ENCODE measurements at regions of chr3 and their contacts with region 1.

Region 1: DNA sequence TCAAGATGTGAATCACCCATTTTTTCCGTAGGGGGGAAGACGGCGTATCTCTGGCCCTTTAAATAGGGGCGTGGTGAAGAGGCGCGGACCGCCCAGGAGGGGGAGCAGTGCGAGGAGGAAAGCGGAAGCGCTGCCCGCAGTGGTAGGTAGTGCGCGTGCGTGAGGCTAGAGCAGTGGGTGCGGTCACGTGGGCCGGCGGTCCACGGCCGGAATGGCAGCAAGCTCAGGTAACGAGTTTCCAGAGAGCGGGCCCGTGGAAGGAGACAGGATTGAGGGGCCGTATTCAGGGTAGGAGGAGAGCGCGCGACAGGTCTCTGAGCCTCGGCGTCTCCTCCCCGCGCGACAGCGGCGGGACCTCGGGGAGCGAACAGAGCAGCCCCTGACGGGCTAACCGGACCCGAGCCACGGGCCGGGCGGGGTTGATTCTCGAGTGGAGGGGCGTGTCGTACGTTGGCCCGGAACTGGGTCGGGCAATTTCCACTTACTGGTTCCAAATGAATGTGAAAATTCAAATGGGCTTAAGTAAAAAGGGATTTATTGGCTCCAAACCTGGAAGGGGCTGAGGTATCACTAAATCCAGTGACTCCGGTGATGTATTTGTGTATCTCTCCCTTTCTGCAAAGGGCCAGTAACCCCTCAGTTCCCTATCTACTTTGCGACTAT is at the start of gene VPS8:
- DNase-seq: peak; percentile 91 to 98 (median 96)
- ATAC-seq: peak; percentile 85
- H3K4me3 ChIP-seq: peak within 1 kb of the TSS; percentile 84
- H3K4me3 Mint-ChIP-seq: peak within 1 kb of the TSS; percentile 95
- H3K27ac ChIP-seq: peak within 1 kb of the TSS; percentile 86 to 87
- H3K27ac Mint-ChIP-seq: peak within 1 kb of the TSS; percentile 90
- H3K4me1 ChIP-seq: peaks cover 28% of the 10 kb centered on the region
- H3K4me1 Mint-ChIP-seq: peaks cover 59% of the 10 kb centered on the region
- H3K27me3 ChIP-seq: no peaks in the 10 kb centered on the region
- H3K27me3 Mint-ChIP-seq: no peaks in the 10 kb centered on the region
- CTCF ChIP-seq: peak; percentile 64
- total RNA-seq, gene VPS8: 56.8 to 61.2 TPM

Region 2: GRCh38 chr3:183099026-183099837 is 1712.9 kb before region 1 on chr3 and contains the start of gene MCCC1:
- CTCF ChIA-PET with region 1: no interaction called
- POLR2A ChIA-PET with region 1: no interaction called
- intact Hi-C with region 1: loop called in 1 of 2 experiments (anchors 10 kb)
- DNase-seq: peak; percentile 92 to 99 (median 96)
- ATAC-seq: peak; percentile 97
- H3K4me3 ChIP-seq: peak within 1 kb of the TSS; percentile 87
- H3K4me3 Mint-ChIP-seq: peak within 1 kb of the TSS; percentile 99
- H3K27ac ChIP-seq: peak within 1 kb of the TSS; percentile 80 to 81
- H3K27ac Mint-ChIP-seq: peak within 1 kb of the TSS; percentile 96
- H3K4me1 ChIP-seq: peaks cover 18% of the 10 kb centered on the region
- H3K4me1 Mint-ChIP-seq: peaks cover 46% of the 10 kb centered on the region
- H3K27me3 ChIP-seq: no peaks in the 10 kb centered on the region
- H3K27me3 Mint-ChIP-seq: no peaks in the 10 kb centered on the region
- CTCF ChIP-seq: no peak
- total RNA-seq, gene MCCC1: 16.4 to 16.7 TPM

Region 3: DNA sequence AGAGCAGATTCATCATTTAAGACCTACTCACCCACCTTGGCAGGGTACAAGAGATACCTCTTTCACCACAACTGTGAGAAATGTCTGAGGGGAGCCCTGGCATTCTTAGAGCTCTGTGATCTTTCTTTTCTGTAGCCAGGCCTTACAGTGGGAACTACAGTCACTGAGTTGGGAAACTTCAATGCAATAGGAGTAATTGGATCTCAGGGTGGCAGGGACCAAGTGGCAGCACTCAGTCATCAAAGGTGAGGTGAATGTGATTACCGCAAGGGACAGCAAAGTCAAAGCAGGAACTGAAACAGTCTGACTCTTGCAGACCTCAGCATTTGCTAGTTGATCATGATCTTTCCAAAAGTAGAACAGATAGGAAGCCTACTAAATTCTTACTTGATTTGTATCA is 1376.5 kb before region 1 on chr3:
- CTCF ChIA-PET with region 1: no interaction called
- POLR2A ChIA-PET with region 1: no interaction called
- intact Hi-C with region 1: no loop called
- DNase-seq: peak in 3 of 14 experiments; percentile 21 to 24 (median 23)
- ATAC-seq: no peak
- H3K4me3 ChIP-seq: no peak overlapping the region
- H3K4me3 Mint-ChIP-seq: no peak overlapping the region
- H3K27ac ChIP-seq: no peak overlapping the region
- H3K27ac Mint-ChIP-seq: no peak overlapping the region
- H3K4me1 ChIP-seq: peaks cover 6% of the 10 kb centered on the region
- H3K4me1 Mint-ChIP-seq: peaks cover 5% of the 10 kb centered on the region
- H3K27me3 ChIP-seq: peaks cover 0 to 2% of the 10 kb centered on the region in 2 experiments
- H3K27me3 Mint-ChIP-seq: no peaks in the 10 kb centered on the region
- CTCF ChIP-seq: no peak

Measured in CD4-positive, alpha-beta T cell (primary cell).